Lower leg skin (tissue), 4 donors: ENCODE measurements at regions of chr7 and their contacts with region 1.

Region 1: GRCh38 chr7:84393786-84394185 is 199.2 kb upstream of the SEMA3A start:
- DNase-seq: no peak
- H3K4me3 ChIP-seq: no peak overlapping the region
- CTCF ChIP-seq: no peak
- POLR2A ChIP-seq: no peak

Region 2: GRCh38 chr7:86243157-86243556 is 1849.4 kb after region 1 on chr7:
- intact Hi-C with region 1: loop called (anchors 5 kb)
- DNase-seq: no peak
- H3K4me3 ChIP-seq: no peak overlapping the region
- CTCF ChIP-seq: no peak
- POLR2A ChIP-seq: no peak